ENCODE measurements at regions of chr1 and their contacts with region 1.

Region 1: GRCh38 chr1:24744911-24745710 is at the start of gene CLIC4:
- DNase-seq: peak; percentile 100
- ATAC-seq: peak; percentile 96 to 97
- H3K4me3 ChIP-seq: peak within 1 kb of the TSS; percentile 96
- H3K27ac ChIP-seq: peak within 1 kb of the TSS; percentile 97
- H3K4me1 ChIP-seq: peaks cover 4% of the 10 kb centered on the region
- H3K27me3 ChIP-seq: no peaks in the 10 kb centered on the region
- total RNA-seq, gene CLIC4: 207 to 248 (median 233) TPM

Region 2: DNA sequence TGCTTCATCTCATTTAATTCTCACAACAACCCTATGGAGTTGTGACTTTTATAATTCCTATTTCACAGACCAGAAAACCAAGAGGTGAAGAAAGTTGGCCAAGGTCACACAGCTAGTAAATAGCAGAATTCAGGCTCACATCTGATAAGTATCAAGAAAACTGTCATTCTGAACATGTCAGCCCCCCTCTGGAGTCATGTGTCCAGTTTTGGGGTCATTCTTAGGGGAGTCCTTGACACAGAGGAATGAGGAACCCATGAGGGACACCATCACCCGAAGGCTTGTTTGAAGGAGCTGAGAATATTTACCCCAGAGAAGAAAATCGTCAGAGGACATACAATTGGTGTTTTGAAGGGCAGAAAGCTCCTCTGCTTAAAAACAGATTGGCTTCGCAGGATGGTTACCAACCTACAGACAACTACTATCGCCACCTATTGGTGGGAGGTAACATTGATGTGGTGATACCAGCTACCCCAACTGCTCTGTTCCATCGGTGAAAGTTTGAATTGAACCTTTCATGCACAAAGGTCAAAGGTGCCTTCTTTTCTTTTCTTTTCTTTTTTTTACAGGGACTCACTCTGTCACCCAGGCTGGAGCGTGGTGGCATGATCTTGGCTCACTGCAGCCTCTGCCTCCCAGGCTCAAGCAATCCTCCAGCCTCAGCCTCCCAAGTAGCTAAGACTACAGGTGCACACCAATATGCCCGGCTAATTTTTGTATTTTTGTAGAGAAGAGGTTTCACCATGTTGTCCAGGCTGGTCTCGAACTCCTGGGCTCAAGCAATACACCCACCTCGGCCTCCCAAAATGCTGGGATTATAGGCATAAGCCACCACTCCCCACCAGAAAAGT is 157.9 kb before region 1 on chr1:
- intact Hi-C with region 1: no loop called
- DNase-seq: no peak
- ATAC-seq: peak; percentile 52 to 62
- H3K4me3 ChIP-seq: no peak overlapping the region
- H3K27ac ChIP-seq: no peak overlapping the region
- H3K4me1 ChIP-seq: no peaks in the 10 kb centered on the region
- H3K27me3 ChIP-seq: no peaks in the 10 kb centered on the region

Region 3: DNA sequence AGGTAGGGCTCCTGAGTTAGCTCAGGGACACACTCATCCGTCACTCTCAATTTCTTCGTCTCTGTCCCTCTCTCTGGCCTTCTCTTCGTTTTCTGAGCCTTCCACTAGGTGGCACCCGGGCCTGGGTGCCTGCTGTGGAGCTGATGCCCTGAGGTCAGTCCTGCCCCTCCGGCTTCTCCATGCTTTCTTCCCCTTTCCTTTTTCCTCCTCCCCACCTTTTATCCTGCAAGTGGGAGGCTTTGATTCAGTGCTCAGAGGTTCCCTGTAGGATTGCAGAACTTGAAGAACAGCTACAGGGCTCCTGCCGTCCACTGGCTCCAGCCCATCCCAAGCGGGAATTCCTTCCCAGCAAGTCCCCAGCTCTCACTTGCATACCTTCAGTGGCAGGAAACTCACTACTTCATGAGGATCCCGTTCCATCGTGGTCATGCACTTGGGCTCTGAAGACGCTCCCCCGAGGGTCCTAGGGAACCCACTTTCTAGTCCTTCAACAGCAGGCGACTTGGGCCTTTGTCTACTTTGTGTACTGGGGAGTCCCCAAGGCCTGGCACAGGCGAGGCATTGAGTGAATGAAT is 56.4 kb before region 1 on chr1:
- intact Hi-C with region 1: loop called (anchors 5 to 10 kb)
- DNase-seq: peak; percentile 69 to 89 (median 87)
- ATAC-seq: peak; percentile 84 to 88
- H3K4me3 ChIP-seq: no peak overlapping the region
- H3K27ac ChIP-seq: no peak overlapping the region
- H3K4me1 ChIP-seq: peaks cover 9% of the 10 kb centered on the region
- H3K27me3 ChIP-seq: no peaks in the 10 kb centered on the region

Region 4: DNA sequence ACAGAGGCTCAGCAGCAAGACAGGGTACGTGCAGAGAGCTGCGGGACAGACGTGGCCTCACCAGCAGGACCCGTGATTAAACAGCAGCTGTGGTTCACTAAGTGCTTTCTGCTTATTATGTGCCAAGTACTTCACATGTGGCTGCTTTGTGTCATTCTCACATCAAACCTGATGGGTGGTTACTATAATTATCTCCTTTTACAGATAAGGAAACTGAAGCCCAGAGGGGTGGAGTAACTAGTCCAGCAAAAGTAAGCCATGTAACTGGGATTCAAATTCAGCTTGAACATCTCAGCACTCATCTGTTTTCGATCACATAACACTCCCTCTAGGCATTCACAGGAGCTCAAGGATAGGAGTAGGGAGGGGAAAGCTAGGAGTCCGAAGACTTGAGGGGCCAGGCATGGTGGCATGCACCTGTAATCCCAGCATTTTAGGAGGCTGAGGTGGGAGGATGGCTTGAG is 50.7 kb before region 1 on chr1:
- intact Hi-C with region 1: loop called (anchors 5 to 10 kb)
- DNase-seq: peak; percentile 53 to 85 (median 75)
- ATAC-seq: peak; percentile 81 to 90
- H3K4me3 ChIP-seq: no peak overlapping the region
- H3K27ac ChIP-seq: peak overlapping the region; percentile 89
- H3K4me1 ChIP-seq: peaks cover 22% of the 10 kb centered on the region
- H3K27me3 ChIP-seq: no peaks in the 10 kb centered on the region

Region 5: DNA sequence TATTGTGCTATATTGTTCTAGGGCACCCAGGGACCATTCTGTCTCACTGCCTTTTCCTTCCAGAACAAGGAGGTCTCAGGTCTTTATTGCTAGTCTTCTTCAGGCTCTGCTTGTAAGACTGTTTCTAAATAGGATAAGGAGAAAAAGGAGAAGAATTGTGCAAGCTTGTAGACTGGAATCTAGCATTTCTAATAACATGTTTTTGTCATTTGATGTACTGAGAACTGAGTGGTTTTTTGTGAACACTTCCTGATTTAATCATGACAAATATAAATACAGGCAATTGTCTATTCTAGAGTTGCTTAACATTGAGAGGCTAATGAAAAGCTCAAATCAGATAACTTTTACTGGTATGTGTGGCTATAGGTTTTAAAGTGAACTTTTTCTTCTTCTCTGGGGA is 77.8 kb after region 1 on chr1:
- intact Hi-C with region 1: loop called in 3 of 4 experiments (anchors 5 to 10 kb)
- DNase-seq: no peak
- ATAC-seq: no peak
- H3K4me3 ChIP-seq: no peak overlapping the region
- H3K27ac ChIP-seq: no peak overlapping the region
- H3K4me1 ChIP-seq: peaks cover 5% of the 10 kb centered on the region
- H3K27me3 ChIP-seq: no peaks in the 10 kb centered on the region

Region 6: GRCh38 chr1:24830680-24831272 is 85.7 kb after region 1 on chr1:
- intact Hi-C with region 1: loop called in 2 of 4 experiments (anchors 5 to 10 kb)
- DNase-seq: no peak
- ATAC-seq: peak; percentile 80 to 86
- H3K4me3 ChIP-seq: no peak overlapping the region
- H3K27ac ChIP-seq: no peak overlapping the region
- H3K4me1 ChIP-seq: peaks cover 2% of the 10 kb centered on the region
- H3K27me3 ChIP-seq: no peaks in the 10 kb centered on the region

Region 7: DNA sequence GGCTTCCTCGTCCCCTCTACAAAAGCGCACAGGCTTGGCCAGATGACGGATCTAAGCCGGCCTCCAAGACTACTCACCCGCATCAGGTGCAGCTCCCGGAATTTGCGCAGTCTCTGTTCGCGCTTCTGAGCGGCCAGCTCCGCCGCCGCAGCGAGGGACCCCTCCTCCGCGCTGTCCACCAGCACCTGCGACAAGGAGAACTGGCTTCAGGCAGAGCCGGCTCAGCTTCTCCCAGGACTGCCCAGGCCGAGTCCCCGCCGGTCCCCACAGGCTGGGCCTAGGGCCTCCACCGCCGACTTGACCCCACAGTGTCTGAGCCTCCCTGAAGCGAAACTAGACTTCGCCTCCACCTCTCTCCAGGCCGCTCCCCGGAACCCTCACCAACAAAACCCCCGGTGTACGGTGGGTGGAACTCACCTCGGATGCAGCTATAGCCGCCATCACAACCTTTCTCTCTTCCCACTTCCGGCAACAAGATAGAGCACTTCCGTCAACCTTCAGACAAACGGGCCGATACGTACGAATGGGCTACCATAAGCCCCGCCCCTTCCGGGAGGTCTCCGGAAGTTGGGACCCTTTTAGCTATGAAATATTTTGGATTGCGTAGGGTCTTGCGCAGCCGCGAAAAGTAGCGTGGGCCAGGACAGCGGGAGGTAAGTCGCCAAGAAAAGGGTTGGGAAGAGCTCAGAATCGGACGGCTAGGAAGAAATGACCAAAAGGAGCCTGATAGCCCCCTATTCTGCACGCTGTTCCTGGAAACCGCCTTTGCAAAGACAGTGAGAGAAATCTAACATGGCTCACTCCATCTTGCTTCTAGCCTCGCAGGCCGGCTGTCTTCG is 487.1 kb after region 1 on chr1 and contains the start of gene SYF2:
- intact Hi-C with region 1: loop called in 1 of 4 experiments (anchors 5 kb)
- DNase-seq: peak; percentile 95 to 97 (median 95)
- ATAC-seq: peak; percentile 95 to 96
- H3K4me3 ChIP-seq: peak within 1 kb of the TSS; percentile 70
- H3K27ac ChIP-seq: peak within 1 kb of the TSS; percentile 98
- H3K4me1 ChIP-seq: no peaks in the 10 kb centered on the region
- H3K27me3 ChIP-seq: no peaks in the 10 kb centered on the region
- total RNA-seq, gene SYF2: 29.7 to 40.5 (median 39.8) TPM

Measured in right cardiac atrium (tissue), 5 donors.